ENCODE measurements at regions of chr11 and their contacts with region 1.

Region 1: GRCh38 chr11:110376711-110377324 is 52.9 kb upstream of the FDX1 start:
- DNase-seq: peak; percentile 68
- ATAC-seq: peak; percentile 83

Region 2: DNA sequence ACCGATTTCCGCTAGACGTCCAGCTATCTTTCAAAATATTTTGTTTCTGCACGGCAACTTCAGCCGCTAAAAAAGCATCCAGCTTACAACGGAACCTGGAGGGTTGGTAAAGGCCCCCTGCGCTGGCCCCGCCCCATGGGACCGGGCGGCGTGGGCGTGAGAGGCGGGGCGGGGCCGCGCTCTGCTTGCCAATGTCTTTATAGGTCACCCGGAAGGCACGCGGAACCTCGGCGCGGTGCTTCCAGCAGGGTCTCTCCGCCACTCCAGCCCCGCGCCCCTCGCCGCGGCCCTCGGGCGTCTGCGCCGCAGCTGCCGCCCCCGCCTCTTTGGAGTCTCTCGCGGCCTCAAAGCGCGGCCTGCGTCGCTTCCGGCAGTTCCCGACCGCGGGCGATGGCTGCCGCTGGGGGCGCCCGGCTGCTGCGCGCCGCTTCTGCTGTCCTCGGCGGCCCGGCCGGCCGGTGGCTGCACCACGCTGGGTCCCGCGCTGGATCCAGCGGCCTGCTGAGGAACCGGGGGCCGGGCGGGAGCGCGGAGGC is 53.0 kb after region 1 on chr11 and contains the start of gene FDX1:
- intact Hi-C with region 1: loop called (anchors 5 kb)
- DNase-seq: peak; percentile 92
- ATAC-seq: peak; percentile 92
- total RNA-seq, gene FDX1: 22.5 TPM